ENCODE measurements at regions of chr22 and their contacts with region 1.

Region 1: DNA sequence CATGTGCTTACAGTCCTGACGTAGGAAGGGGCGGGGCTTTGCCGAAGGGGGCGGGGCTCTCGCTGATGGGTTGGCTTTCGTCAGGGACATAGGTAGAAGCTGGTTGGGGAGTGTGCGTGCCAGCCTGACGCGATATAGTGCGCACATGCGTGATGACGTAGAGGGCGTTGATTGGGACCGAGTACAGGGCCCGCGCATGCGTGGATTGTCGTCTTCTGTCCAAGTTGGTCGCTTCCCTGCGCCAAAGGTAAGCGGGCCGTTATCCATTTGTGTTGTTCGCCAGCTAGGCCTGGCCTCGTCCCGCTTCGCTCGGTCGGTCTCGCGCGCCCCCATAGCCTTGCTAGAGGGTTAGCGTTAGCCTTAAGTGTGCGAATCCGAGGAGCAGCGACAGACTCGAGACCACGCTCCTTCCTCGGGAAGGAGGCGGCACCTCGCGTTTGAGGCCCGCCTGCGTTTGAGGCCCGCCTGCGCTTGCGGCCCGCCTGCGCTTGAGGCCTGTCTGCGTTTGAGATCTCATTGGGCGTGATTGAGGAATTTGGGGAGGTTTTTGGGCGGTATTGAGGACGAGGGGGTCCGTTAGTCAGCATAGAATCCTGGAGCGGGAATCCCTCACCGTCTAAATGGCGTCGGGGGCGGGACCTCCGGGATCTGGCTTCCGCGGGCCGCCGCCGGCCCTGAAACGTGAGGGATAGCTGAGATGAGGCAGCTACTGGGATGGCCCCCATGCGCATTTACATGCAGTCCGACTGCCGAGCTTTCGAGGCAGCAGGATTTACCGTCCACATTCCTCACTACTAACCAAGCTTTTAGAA is at the start of gene XRCC6:
- DNase-seq: peak; percentile 99 to 100 (median 100)
- ATAC-seq: peak; percentile 88
- H3K4me3 ChIP-seq: peak within 1 kb of the TSS; percentile 65
- H3K4me3 Mint-ChIP-seq: peak within 1 kb of the TSS; percentile 95
- H3K27ac ChIP-seq: peak within 1 kb of the TSS; percentile 95 to 96
- H3K27ac Mint-ChIP-seq: peak within 1 kb of the TSS; percentile 98
- H3K4me1 ChIP-seq: peaks cover 43% of the 10 kb centered on the region
- H3K4me1 Mint-ChIP-seq: peaks cover 49% of the 10 kb centered on the region
- H3K27me3 ChIP-seq: no peaks in the 10 kb centered on the region
- H3K27me3 Mint-ChIP-seq: no peaks in the 10 kb centered on the region
- CTCF ChIP-seq: no peak
- total RNA-seq, gene XRCC6: 162 TPM

Region 2: GRCh38 chr22:41197038-41197972 is 424.0 kb before region 1 on chr22:
- CTCF ChIA-PET with region 1: no interaction called
- POLR2A ChIA-PET with region 1: no interaction called
- intact Hi-C with region 1: loop called in 1 of 2 experiments (anchors 10 kb)
- DNase-seq: peak; percentile 62 to 93 (median 76)
- ATAC-seq: peak; percentile 85
- H3K4me3 ChIP-seq: peak overlapping the region; percentile 92
- H3K4me3 Mint-ChIP-seq: peak overlapping the region; percentile 95
- H3K27ac ChIP-seq: no peak overlapping the region
- H3K27ac Mint-ChIP-seq: peak overlapping the region; percentile 28
- H3K4me1 ChIP-seq: peaks cover 19% of the 10 kb centered on the region
- H3K4me1 Mint-ChIP-seq: peaks cover 14% of the 10 kb centered on the region
- H3K27me3 ChIP-seq: no peaks in the 10 kb centered on the region
- H3K27me3 Mint-ChIP-seq: no peaks in the 10 kb centered on the region
- CTCF ChIP-seq: no peak

Region 3: GRCh38 chr22:41394012-41394356 is 227.3 kb before region 1 on chr22:
- CTCF ChIA-PET with region 1: no interaction called
- POLR2A ChIA-PET with region 1: no interaction called
- intact Hi-C with region 1: no loop called
- DNase-seq: no peak
- ATAC-seq: no peak
- H3K4me3 ChIP-seq: no peak overlapping the region
- H3K4me3 Mint-ChIP-seq: no peak overlapping the region
- H3K27ac ChIP-seq: no peak overlapping the region
- H3K27ac Mint-ChIP-seq: no peak overlapping the region
- H3K4me1 ChIP-seq: no peaks in the 10 kb centered on the region
- H3K4me1 Mint-ChIP-seq: no peaks in the 10 kb centered on the region
- H3K27me3 ChIP-seq: no peaks in the 10 kb centered on the region
- H3K27me3 Mint-ChIP-seq: no peaks in the 10 kb centered on the region
- CTCF ChIP-seq: no peak

Region 4: DNA sequence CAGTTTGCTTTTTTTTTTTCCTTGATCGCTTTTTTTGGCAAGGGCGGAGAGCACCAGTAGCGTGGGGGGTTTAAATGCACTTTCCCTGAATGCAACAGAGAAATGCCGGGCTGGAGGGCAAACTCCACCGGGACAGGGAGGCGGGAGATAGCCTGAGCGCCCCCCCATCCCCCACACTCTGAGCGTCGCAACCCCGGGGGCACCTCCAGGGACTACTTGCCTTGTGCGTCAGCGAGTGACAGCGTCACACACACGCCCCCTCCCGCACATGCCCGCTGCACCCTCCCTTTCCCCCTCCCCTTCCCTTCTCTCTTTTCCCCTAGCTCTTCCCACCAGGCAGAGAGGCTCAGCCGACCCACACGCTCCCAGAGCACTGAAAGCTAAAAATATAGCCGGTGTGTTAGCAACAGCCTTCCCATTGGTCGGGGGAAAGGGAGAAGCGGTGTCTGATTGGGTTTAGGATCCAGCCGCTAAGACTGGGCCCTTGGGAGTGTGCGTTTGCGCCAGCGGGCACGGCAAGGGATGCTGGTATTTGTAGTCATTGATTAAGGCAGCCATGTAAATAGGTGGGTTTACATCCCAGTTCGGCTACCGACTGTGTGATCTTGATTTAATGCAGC is 173.0 kb before region 1 on chr22:
- CTCF ChIA-PET with region 1: no interaction called
- POLR2A ChIA-PET with region 1: interaction called, 9 read pairs
- intact Hi-C with region 1: loop called in 1 of 2 experiments (anchors 5 kb)
- DNase-seq: peak; percentile 79 to 97 (median 84)
- ATAC-seq: peak; percentile 73
- H3K4me3 ChIP-seq: peak overlapping the region; percentile 98
- H3K4me3 Mint-ChIP-seq: peak overlapping the region; percentile 94
- H3K27ac ChIP-seq: peak overlapping the region; percentile 97 to 98
- H3K27ac Mint-ChIP-seq: peak overlapping the region; percentile 95
- H3K4me1 ChIP-seq: peaks cover 41% of the 10 kb centered on the region
- H3K4me1 Mint-ChIP-seq: peaks cover 29% of the 10 kb centered on the region
- H3K27me3 ChIP-seq: no peaks in the 10 kb centered on the region
- H3K27me3 Mint-ChIP-seq: no peaks in the 10 kb centered on the region
- CTCF ChIP-seq: no peak

Region 5: DNA sequence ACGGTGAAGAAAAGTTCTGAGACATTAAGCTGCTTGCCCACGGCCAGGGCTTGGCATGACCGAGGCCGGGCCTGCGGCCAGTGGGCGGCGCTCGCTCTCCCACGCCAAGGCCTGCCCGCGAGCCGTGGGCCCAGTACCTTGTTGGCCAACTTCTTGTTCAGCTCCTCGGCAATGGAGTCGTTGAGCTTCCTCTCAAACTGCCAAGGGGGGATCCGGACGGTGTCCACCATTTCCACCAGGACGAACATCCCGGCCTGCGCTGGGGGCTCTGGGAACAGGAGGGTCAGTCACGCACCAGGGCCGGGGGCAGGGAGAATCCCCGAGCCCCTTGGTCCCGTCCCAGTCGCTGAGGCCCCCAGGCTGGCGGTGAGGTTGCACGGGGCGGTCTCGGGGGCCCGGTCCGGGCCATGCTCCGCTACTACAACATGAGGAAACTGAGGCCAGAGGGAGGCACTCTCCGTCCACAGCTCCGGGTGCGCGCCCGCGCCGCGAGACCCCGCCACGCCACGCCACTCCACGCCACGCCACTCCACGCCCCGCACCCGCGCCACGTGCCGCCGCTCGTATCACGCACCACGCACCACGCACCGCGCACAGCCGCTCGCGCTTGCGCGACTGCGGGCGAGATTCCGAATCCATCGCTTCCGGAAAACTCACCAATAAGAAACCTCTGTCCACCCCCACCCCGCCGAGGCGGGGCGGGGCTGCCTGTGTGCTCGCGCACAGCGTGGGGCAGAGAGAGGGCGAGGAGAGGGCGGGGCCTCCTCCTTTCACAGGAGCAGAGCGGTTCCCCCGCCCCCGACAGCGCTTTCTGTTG is 77.2 kb before region 1 on chr22 and contains the start of gene POLR3H:
- CTCF ChIA-PET with region 1: no interaction called
- POLR2A ChIA-PET with region 1: interaction called, 12 read pairs
- intact Hi-C with region 1: loop called (anchors 2 kb)
- DNase-seq: peak; percentile 91 to 99 (median 96)
- ATAC-seq: peak; percentile 98
- H3K4me3 ChIP-seq: peak within 1 kb of the TSS; percentile 90
- H3K4me3 Mint-ChIP-seq: peak within 1 kb of the TSS; percentile 98
- H3K27ac ChIP-seq: peak within 1 kb of the TSS; percentile 77 to 81
- H3K27ac Mint-ChIP-seq: peak within 1 kb of the TSS; percentile 85
- H3K4me1 ChIP-seq: peaks cover 26% of the 10 kb centered on the region
- H3K4me1 Mint-ChIP-seq: peaks cover 41% of the 10 kb centered on the region
- H3K27me3 ChIP-seq: no peaks in the 10 kb centered on the region
- H3K27me3 Mint-ChIP-seq: no peaks in the 10 kb centered on the region
- CTCF ChIP-seq: peak; percentile 51
- total RNA-seq, gene POLR3H: 13.4 to 17.3 TPM

Region 6: GRCh38 chr22:41608386-41608785 is 12.9 kb before region 1 on chr22:
- CTCF ChIA-PET with region 1: interaction called, 3 read pairs
- POLR2A ChIA-PET with region 1: interaction called, 14 read pairs
- intact Hi-C with region 1: no loop called
- DNase-seq: no peak
- ATAC-seq: no peak
- H3K4me3 ChIP-seq: no peak overlapping the region
- H3K4me3 Mint-ChIP-seq: no peak overlapping the region
- H3K27ac ChIP-seq: no peak overlapping the region
- H3K27ac Mint-ChIP-seq: no peak overlapping the region
- H3K4me1 ChIP-seq: peaks cover 12% of the 10 kb centered on the region
- H3K4me1 Mint-ChIP-seq: peaks cover 13% of the 10 kb centered on the region
- H3K27me3 ChIP-seq: no peaks in the 10 kb centered on the region
- H3K27me3 Mint-ChIP-seq: no peaks in the 10 kb centered on the region
- CTCF ChIP-seq: no peak

Region 7: DNA sequence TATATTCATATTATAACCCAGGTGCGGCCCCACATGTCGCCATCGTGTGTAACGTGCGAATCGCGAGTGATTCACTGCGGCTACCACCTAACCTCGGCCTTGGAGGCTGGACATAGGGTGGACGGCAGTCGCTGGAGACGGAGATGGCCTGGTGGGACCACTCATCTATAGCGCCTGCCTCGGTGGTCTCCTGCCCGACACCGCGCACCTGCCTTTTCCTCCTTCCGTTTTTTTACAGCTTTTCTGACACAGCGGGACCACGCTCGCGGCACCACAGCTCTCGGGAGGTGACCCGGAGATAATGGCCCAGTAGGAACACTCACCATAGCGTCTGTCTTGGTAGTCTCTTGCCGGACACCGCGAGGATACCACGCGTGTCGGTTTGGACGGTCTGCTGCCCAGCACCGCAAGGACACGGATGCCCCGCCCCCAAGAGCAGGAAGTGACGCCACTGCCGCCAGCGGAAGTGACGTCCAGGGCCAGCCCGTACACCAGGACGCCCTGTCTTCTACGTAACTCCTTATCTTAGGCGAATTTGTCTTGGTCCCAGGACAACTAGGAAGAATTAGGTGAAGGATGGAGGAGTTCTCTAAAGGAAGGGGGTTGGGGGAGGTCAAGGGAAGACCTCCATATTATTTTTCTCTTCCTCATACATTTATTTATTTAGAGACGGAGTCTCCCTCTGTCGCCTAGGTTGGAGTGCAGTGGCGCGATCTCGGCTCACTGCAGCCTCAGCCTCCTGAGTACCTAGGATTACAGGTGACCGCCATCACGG is 60.9 kb after region 1 on chr22:
- CTCF ChIA-PET with region 1: no interaction called
- POLR2A ChIA-PET with region 1: no interaction called
- intact Hi-C with region 1: loop called in 1 of 2 experiments (anchors 5 kb)
- DNase-seq: peak; percentile 72 to 93 (median 80)
- ATAC-seq: peak; percentile 83
- H3K4me3 ChIP-seq: peak overlapping the region; percentile 75
- H3K4me3 Mint-ChIP-seq: peak overlapping the region; percentile 97
- H3K27ac ChIP-seq: peak overlapping the region; percentile 86 to 95
- H3K27ac Mint-ChIP-seq: peak overlapping the region; percentile 98
- H3K4me1 ChIP-seq: peaks cover 44% of the 10 kb centered on the region
- H3K4me1 Mint-ChIP-seq: peaks cover 52% of the 10 kb centered on the region
- H3K27me3 ChIP-seq: no peaks in the 10 kb centered on the region
- H3K27me3 Mint-ChIP-seq: no peaks in the 10 kb centered on the region
- CTCF ChIP-seq: no peak

Region 8: DNA sequence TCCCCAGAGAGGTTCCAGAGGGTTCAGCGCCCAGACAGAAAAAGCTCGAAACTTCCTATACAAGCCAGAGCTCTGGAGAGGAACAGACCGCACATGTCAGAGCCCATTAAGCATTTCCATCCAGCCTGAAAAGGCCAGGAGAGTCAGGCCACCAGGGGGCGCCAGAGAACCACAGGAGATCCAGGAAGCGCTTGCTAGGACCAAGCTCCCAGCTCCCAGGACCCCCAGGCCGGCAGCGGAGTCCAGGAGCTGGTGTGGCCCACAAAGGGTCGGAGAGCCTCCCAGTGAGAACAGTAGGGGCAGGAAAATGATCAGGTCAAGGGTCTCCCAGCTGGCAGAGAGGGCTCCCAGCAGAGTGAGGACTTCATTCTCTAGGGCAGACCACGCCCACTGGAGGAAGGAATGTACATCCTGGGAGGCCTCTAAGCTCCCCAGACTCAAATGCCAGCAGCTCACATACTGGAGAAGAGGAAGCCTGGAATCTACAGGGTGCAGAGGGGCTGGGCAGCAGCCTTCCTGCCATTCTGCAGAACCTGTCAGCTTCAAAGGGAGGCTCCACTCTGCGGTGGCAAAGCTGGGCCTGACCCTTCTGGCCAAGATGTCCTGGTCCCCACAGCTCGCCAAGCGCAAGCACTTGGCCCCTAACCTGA is 75.9 kb after region 1 on chr22:
- CTCF ChIA-PET with region 1: no interaction called
- POLR2A ChIA-PET with region 1: no interaction called
- intact Hi-C with region 1: no loop called
- DNase-seq: peak; percentile 84 to 98 (median 92)
- ATAC-seq: peak; percentile 78
- H3K4me3 ChIP-seq: peak overlapping the region; percentile 24
- H3K4me3 Mint-ChIP-seq: peak overlapping the region; percentile 59
- H3K27ac ChIP-seq: no peak overlapping the region
- H3K27ac Mint-ChIP-seq: no peak overlapping the region
- H3K4me1 ChIP-seq: peaks cover 24% of the 10 kb centered on the region
- H3K4me1 Mint-ChIP-seq: peaks cover 12% of the 10 kb centered on the region
- H3K27me3 ChIP-seq: no peaks in the 10 kb centered on the region
- H3K27me3 Mint-ChIP-seq: no peaks in the 10 kb centered on the region
- CTCF ChIP-seq: peak; percentile 98

Region 9: DNA sequence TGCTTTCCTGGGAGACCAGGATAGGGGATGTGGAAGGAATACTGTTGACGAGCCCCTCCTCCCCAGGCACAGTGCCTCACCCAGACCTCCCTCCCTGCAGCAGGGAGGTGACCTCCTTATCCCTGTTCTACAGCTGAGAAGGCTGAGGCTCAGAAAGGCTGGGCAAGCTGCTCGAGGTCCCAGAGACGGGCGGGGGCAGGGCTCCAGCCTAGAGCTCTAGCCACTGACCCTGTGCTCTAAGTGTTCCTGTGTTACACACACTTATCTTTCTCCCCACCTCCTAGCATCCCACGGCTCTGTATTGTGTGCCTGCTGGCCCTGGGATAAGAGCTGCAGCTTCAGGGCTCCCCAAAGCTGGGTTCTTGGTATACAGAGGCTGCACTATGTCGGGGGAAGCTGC is 187.1 kb after region 1 on chr22:
- CTCF ChIA-PET with region 1: no interaction called
- POLR2A ChIA-PET with region 1: no interaction called
- intact Hi-C with region 1: no loop called
- DNase-seq: no peak
- ATAC-seq: no peak
- H3K4me3 ChIP-seq: no peak overlapping the region
- H3K4me3 Mint-ChIP-seq: no peak overlapping the region
- H3K27ac ChIP-seq: no peak overlapping the region
- H3K27ac Mint-ChIP-seq: no peak overlapping the region
- H3K4me1 ChIP-seq: peaks cover 6% of the 10 kb centered on the region
- H3K4me1 Mint-ChIP-seq: peaks cover 10% of the 10 kb centered on the region
- H3K27me3 ChIP-seq: no peaks in the 10 kb centered on the region
- H3K27me3 Mint-ChIP-seq: no peaks in the 10 kb centered on the region
- CTCF ChIP-seq: no peak

Region 10: GRCh38 chr22:41957941-41958556 is 336.7 kb after region 1 on chr22:
- CTCF ChIA-PET with region 1: no interaction called
- POLR2A ChIA-PET with region 1: no interaction called
- intact Hi-C with region 1: no loop called
- DNase-seq: no peak
- ATAC-seq: peak; percentile 39
- H3K4me3 ChIP-seq: no peak overlapping the region
- H3K4me3 Mint-ChIP-seq: no peak overlapping the region
- H3K27ac ChIP-seq: no peak overlapping the region
- H3K27ac Mint-ChIP-seq: no peak overlapping the region
- H3K4me1 ChIP-seq: peaks cover 14% of the 10 kb centered on the region
- H3K4me1 Mint-ChIP-seq: peaks cover 4% of the 10 kb centered on the region
- H3K27me3 ChIP-seq: no peaks in the 10 kb centered on the region
- H3K27me3 Mint-ChIP-seq: no peaks in the 10 kb centered on the region
- CTCF ChIP-seq: peak; percentile 60